Endothelial cell of umbilical vein (primary cell): ENCODE measurements at regions of chr13 and their contacts with region 1.

Region 1: DNA sequence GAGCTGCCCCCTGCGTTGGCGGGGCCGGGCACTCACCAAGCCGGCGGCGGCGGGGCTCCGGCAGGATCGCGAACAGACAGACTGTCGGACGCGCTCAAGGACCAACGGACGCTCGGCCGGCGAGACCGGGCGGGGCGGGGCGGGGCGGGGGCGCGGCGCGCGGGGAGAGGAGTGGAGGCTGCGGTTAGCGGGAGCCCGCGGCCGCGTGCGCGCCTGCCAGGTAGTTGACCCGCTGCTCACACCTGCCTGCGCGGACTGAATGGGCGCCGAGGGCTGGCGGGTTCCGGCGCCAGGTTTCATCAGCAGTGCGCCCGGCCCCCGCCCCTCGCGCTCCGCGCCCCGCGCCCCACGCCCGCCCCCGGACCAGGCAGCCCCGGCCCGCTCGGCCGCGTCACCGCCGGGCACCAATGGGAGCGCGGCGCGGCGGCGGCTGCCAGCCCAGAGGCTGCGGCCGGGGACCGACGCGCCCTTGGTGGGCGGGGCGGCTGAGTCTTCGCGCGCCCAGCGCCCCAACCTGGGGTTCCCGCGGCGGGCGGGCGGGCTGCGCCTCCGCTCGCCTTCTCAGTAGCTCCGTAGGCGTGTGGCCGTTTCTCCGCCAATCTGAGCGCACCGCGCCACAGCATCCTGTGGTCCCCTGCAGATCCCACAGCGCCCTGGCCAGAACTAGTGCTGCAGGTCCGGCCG is at the start of gene SLC7A1:
- DNase-seq: peak; percentile 84
- H3K4me3 ChIP-seq: peak within 1 kb of the TSS; percentile 66 to 93 (median 71)
- H3K27ac ChIP-seq: peak within 1 kb of the TSS; percentile 91
- H3K4me1 ChIP-seq: peaks cover 20% of the 10 kb centered on the region
- H3K27me3 ChIP-seq: no peaks in the 10 kb centered on the region
- CTCF ChIP-seq: peak in 1 of 2 donors; percentile 20
- POLR2A ChIP-seq: no peak
- total RNA-seq, gene SLC7A1: 79.3 and 81.2 TPM in 2 replicates

Region 2: DNA sequence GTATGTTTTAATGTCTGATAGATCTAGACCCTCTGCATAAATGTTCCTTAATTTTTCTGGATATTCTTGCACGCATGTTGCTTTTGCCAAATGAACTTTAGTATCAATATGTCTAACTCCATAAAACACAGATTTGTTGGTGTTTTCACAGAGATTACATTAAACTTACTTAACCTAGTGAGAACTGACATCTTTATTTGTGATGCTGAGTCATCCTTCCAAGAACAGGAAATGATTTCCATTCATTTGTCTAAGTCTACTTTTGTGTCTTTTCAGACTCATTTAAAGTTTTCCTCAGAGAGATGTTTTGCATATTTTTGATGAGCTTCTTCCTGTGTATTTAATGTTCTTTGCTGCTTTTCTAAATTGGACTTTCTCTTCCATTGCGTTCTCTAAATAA is 184.0 kb before region 1 on chr13:
- CTCF ChIA-PET with region 1: no interaction called
- POLR2A ChIA-PET with region 1: no interaction called
- dilution Hi-C with region 1: no loop called
- intact Hi-C with region 1: no loop called
- DNase-seq: no peak
- H3K4me3 ChIP-seq: no peak overlapping the region
- H3K27ac ChIP-seq: no peak overlapping the region
- H3K4me1 ChIP-seq: no peaks in the 10 kb centered on the region
- H3K27me3 ChIP-seq: no peaks in the 10 kb centered on the region
- CTCF ChIP-seq: no peak
- POLR2A ChIP-seq: no peak

Region 3: GRCh38 chr13:29522044-29522685 is 73.4 kb before region 1 on chr13:
- CTCF ChIA-PET with region 1: no interaction called
- POLR2A ChIA-PET with region 1: no interaction called
- dilution Hi-C with region 1: no loop called
- intact Hi-C with region 1: loop called (anchors 5 kb)
- DNase-seq: no peak
- H3K4me3 ChIP-seq: no peak overlapping the region
- H3K27ac ChIP-seq: no peak overlapping the region
- H3K4me1 ChIP-seq: peaks cover 34% of the 10 kb centered on the region
- H3K27me3 ChIP-seq: no peaks in the 10 kb centered on the region
- CTCF ChIP-seq: no peak
- POLR2A ChIP-seq: no peak

Region 4: GRCh38 chr13:29548722-29549121 is 46.8 kb before region 1 on chr13:
- CTCF ChIA-PET with region 1: no interaction called
- POLR2A ChIA-PET with region 1: no interaction called
- dilution Hi-C with region 1: no loop called
- intact Hi-C with region 1: loop called (anchors 1 kb)
- DNase-seq: peak; percentile 92
- H3K4me3 ChIP-seq: no peak overlapping the region
- H3K27ac ChIP-seq: peak overlapping the region; percentile 99
- H3K4me1 ChIP-seq: peaks cover 46% of the 10 kb centered on the region
- H3K27me3 ChIP-seq: no peaks in the 10 kb centered on the region
- CTCF ChIP-seq: no peak
- POLR2A ChIP-seq: no peak

Region 5: GRCh38 chr13:29702912-29703351 is 107.4 kb after region 1 on chr13:
- CTCF ChIA-PET with region 1: interaction called, 3 read pairs
- POLR2A ChIA-PET with region 1: no interaction called
- dilution Hi-C with region 1: no loop called
- intact Hi-C with region 1: loop called (anchors 1 kb)
- DNase-seq: peak; percentile 77
- H3K4me3 ChIP-seq: peak overlapping the region in 1 of 3 experiments; percentile 58
- H3K27ac ChIP-seq: peak overlapping the region; percentile 52
- H3K4me1 ChIP-seq: peaks cover 12% of the 10 kb centered on the region
- H3K27me3 ChIP-seq: no peaks in the 10 kb centered on the region
- CTCF ChIP-seq: no peak
- POLR2A ChIP-seq: no peak

Region 6: GRCh38 chr13:29850224-29850898 is 254.8 kb after region 1 on chr13 and contains the start of gene UBL3:
- CTCF ChIA-PET with region 1: no interaction called
- POLR2A ChIA-PET with region 1: no interaction called
- dilution Hi-C with region 1: no loop called
- intact Hi-C with region 1: loop called (anchors 5 kb)
- DNase-seq: peak; percentile 97
- H3K4me3 ChIP-seq: peak within 1 kb of the TSS; percentile 80 to 99 (median 98)
- H3K27ac ChIP-seq: peak within 1 kb of the TSS; percentile 83
- H3K4me1 ChIP-seq: peaks cover 22% of the 10 kb centered on the region
- H3K27me3 ChIP-seq: peaks cover 0 to 14% of the 10 kb centered on the region in 2 experiments
- CTCF ChIP-seq: no peak
- POLR2A ChIP-seq: peak; percentile 62
- total RNA-seq, gene UBL3: 11.1 and 11.8 TPM in 2 replicates